ENCODE measurements at regions of chr4 and their contacts with region 1.

Region 1: GRCh38 chr4:47933840-47934239 is 19.5 kb upstream of the NFXL1 start:
- DNase-seq: peak; percentile 45
- H3K4me3 ChIP-seq: no peak overlapping the region
- H3K27ac ChIP-seq: no peak overlapping the region
- H3K4me1 ChIP-seq: peaks cover 3% of the 10 kb centered on the region
- H3K27me3 ChIP-seq: peaks cover 8 to 20% of the 10 kb centered on the region in 2 experiments
- CTCF ChIP-seq: peak; percentile 23 to 41
- POLR2A ChIP-seq: no peak

Region 2: GRCh38 chr4:46844325-46844917 is 1089.4 kb before region 1 on chr4:
- CTCF ChIA-PET with region 1: interaction called, 4 read pairs
- POLR2A ChIA-PET with region 1: no interaction called
- dilution Hi-C with region 1: no loop called
- intact Hi-C with region 1: loop called (anchors 5 kb)
- DNase-seq: peak; percentile 64
- H3K4me3 ChIP-seq: no peak overlapping the region
- H3K27ac ChIP-seq: no peak overlapping the region
- H3K4me1 ChIP-seq: no peaks in the 10 kb centered on the region
- H3K27me3 ChIP-seq: no peaks in the 10 kb centered on the region
- CTCF ChIP-seq: peak; percentile 53 to 55
- POLR2A ChIP-seq: no peak

Region 3: GRCh38 chr4:46931981-46932380 is 1001.9 kb before region 1 on chr4:
- CTCF ChIA-PET with region 1: interaction called, 3 read pairs
- POLR2A ChIA-PET with region 1: no interaction called
- dilution Hi-C with region 1: no loop called
- intact Hi-C with region 1: loop called (anchors 10 kb)
- DNase-seq: peak; percentile 35
- H3K4me3 ChIP-seq: no peak overlapping the region
- H3K27ac ChIP-seq: no peak overlapping the region
- H3K4me1 ChIP-seq: no peaks in the 10 kb centered on the region
- H3K27me3 ChIP-seq: peaks cover 0 to 9% of the 10 kb centered on the region in 2 experiments
- CTCF ChIP-seq: peak; percentile 47 to 65
- POLR2A ChIP-seq: no peak

Region 4: DNA sequence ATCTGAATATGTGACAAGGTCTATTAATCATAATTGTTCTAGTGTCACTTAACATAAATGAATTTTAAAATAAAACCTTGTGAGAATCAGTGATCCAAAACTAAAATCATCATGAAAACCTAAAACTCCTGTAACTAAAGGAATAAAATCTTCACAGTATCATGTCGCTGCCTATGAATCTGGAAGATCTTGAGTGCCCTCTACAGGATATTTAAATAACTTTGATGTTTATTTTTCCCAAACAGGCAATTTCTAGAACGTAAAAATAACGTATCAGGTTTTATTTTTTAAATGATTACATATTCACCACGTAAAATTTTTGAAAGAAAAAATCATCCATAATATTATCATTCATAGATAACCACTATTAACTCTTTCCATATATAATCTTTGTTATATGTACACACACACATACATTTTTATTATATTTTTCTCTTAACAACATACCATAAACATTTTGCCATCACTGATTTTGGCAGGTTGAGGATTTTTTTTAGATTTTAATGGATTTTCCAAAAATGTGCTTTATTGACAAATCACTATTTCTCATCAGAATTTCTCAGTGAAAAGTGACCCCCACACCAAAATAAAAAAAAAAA is 549.9 kb before region 1 on chr4:
- CTCF ChIA-PET with region 1: interaction called, 3 read pairs
- POLR2A ChIA-PET with region 1: no interaction called
- dilution Hi-C with region 1: no loop called
- intact Hi-C with region 1: loop called (anchors 10 kb)
- DNase-seq: peak; percentile 28
- H3K4me3 ChIP-seq: no peak overlapping the region
- H3K27ac ChIP-seq: no peak overlapping the region
- H3K4me1 ChIP-seq: no peaks in the 10 kb centered on the region
- H3K27me3 ChIP-seq: no peaks in the 10 kb centered on the region
- CTCF ChIP-seq: peak; percentile 13 to 20
- POLR2A ChIP-seq: no peak

Region 5: GRCh38 chr4:47668810-47669408 is 264.9 kb before region 1 on chr4:
- CTCF ChIA-PET with region 1: interaction called, 58 read pairs
- POLR2A ChIA-PET with region 1: no interaction called
- dilution Hi-C with region 1: no loop called
- intact Hi-C with region 1: loop called (anchors 1 kb)
- DNase-seq: peak; percentile 56
- H3K4me3 ChIP-seq: no peak overlapping the region
- H3K27ac ChIP-seq: no peak overlapping the region
- H3K4me1 ChIP-seq: no peaks in the 10 kb centered on the region
- H3K27me3 ChIP-seq: peaks cover 9 to 10% of the 10 kb centered on the region in 2 experiments
- CTCF ChIP-seq: peak; percentile 27 to 50
- POLR2A ChIP-seq: no peak

Region 6: GRCh38 chr4:47686294-47686872 is 247.5 kb before region 1 on chr4:
- CTCF ChIA-PET with region 1: interaction called, 17 read pairs
- POLR2A ChIA-PET with region 1: no interaction called
- dilution Hi-C with region 1: no loop called
- intact Hi-C with region 1: loop called (anchors 1 kb)
- DNase-seq: peak; percentile 62
- H3K4me3 ChIP-seq: no peak overlapping the region
- H3K27ac ChIP-seq: no peak overlapping the region
- H3K4me1 ChIP-seq: no peaks in the 10 kb centered on the region
- H3K27me3 ChIP-seq: peaks cover 2 to 17% of the 10 kb centered on the region in 2 experiments
- CTCF ChIP-seq: peak; percentile 72 to 73
- POLR2A ChIP-seq: no peak

Region 7: DNA sequence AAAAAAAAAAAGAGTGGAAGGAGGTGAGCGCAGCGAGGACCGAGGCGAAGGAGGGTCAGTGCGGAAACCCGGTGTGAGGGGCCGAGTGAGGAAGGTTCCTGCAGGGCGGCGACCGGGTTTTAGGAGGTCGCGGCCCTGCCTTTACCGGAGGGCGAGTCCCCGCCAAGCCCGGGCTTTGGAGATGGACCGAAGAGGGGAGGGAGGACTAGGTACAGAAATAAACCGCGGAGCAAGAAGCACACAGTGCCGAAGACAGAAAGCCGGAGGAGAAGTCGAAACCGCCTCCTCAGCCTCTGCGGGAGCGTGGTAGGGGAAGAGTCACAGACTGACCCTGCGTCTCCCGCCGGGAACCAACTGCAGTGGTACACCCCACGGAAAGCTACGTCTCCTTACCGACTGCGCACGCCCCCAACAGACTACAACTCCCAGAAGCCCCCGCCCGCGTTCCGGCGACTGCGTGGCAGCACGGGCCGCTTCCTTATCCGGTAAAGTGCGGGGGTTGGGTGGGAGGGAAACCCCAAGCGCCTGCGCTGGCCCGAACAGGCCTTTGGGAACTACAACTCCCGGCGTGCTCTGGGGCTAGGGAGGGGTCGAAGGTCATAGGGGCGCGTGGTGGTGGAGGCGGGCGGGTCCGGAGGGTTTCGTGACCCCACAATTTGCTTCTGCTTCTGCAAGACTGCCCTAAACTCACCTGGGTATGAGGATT is 19.5 kb before region 1 on chr4 and contains the start of gene NFXL1:
- CTCF ChIA-PET with region 1: interaction called, 10 read pairs
- POLR2A ChIA-PET with region 1: no interaction called
- dilution Hi-C with region 1: no loop called
- intact Hi-C with region 1: loop called (anchors 2 kb)
- DNase-seq: peak; percentile 97
- H3K4me3 ChIP-seq: peak within 1 kb of the TSS; percentile 73 to 93 (median 83)
- H3K27ac ChIP-seq: peak within 1 kb of the TSS; percentile 54
- H3K4me1 ChIP-seq: peaks cover 17% of the 10 kb centered on the region
- H3K27me3 ChIP-seq: no peaks in the 10 kb centered on the region
- CTCF ChIP-seq: no peak
- POLR2A ChIP-seq: peak; percentile 93
- total RNA-seq, gene NFXL1: 11.8 and 14.6 TPM in 2 replicates

Region 8: GRCh38 chr4:48167538-48168263 is 233.9 kb after region 1 on chr4:
- CTCF ChIA-PET with region 1: no interaction called
- POLR2A ChIA-PET with region 1: no interaction called
- dilution Hi-C with region 1: no loop called
- intact Hi-C with region 1: no loop called
- DNase-seq: no peak
- H3K4me3 ChIP-seq: no peak overlapping the region
- H3K27ac ChIP-seq: no peak overlapping the region
- H3K4me1 ChIP-seq: no peaks in the 10 kb centered on the region
- H3K27me3 ChIP-seq: peaks cover 0 to under 1% of the 10 kb centered on the region in 2 experiments
- CTCF ChIP-seq: no peak
- POLR2A ChIP-seq: no peak

Measured in endothelial cell of umbilical vein (primary cell).